ENCODE measurements at regions of chr1 and their contacts with region 1.

Region 1: DNA sequence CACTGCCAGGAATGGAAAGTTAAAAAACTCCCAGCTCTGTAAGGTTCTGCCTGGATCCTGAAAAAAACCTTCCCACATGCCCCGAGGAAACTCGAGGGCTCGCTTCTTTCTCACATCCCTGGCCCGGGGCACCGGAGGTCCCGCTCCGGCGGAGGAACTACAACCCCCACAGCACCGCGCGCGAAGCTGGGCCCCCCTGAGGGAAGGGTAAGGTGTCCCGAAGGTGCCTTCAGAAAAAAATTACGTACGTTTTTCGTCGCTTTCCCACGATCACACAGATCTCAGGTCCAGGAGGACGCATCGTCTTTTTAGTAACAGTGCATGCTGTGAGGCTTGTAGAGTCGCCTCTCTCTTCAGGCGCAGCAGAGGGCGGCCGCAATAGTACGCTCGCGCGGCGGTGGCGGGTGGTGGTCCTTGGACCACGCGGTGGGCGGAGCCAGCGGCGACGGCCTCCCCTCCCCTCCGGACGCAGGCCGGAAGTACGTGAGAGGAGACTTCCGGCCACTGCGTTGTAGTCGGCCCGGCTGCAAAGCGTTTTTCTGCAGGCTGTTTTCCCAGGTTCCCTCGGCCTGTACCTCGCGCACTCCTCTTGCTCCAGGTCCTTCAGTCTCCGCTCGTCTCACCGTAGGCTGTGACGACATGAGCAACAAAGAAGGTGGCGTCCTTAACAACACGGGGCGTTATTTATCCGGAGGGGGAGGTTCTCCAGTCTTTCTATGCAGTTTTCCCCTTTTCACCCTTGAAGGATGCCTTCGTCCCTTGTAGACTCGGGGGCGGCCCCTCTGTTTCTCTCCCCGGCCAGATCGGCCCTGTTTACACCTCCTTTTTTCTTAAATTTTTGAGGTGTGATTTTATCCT is at the start of gene TSNAX:
- DNase-seq: peak; percentile 85 to 94 (median 92)
- ATAC-seq: peak; percentile 93
- H3K4me3 ChIP-seq: peak within 1 kb of the TSS; percentile 93
- H3K4me3 Mint-ChIP-seq: peak within 1 kb of the TSS; percentile 85 to 99 (median 97)
- H3K27ac ChIP-seq: peak within 1 kb of the TSS; percentile 86
- H3K27ac Mint-ChIP-seq: peak within 1 kb of the TSS; percentile 96 to 100 (median 99)
- H3K4me1 ChIP-seq: peaks cover 24 to 26% of the 10 kb centered on the region in 2 donors
- H3K4me1 Mint-ChIP-seq: peaks cover 23 to 55% (median 50%) of the 10 kb centered on the region in 7 donors
- H3K27me3 ChIP-seq: no peaks in the 10 kb centered on the region
- H3K27me3 Mint-ChIP-seq: no peaks in the 10 kb centered on the region
- total RNA-seq, gene TSNAX: 33.7 to 49.7 (median 34.3) TPM

Region 2: GRCh38 chr1:230642263-230642959 is 886.0 kb before region 1 on chr1 and contains the start of gene COG2:
- CTCF ChIA-PET with region 1: no interaction called
- POLR2A ChIA-PET with region 1: no interaction called
- intact Hi-C with region 1: loop called in 1 of 2 experiments (anchors 5 kb)
- DNase-seq: peak; percentile 84 to 100 (median 91)
- ATAC-seq: peak; percentile 99
- H3K4me3 ChIP-seq: peak within 1 kb of the TSS; percentile 56
- H3K4me3 Mint-ChIP-seq: peak within 1 kb of the TSS; percentile 90 to 100 (median 96)
- H3K27ac ChIP-seq: peak within 1 kb of the TSS; percentile 76
- H3K27ac Mint-ChIP-seq: peak within 1 kb of the TSS; percentile 81 to 98 (median 93)
- H3K4me1 ChIP-seq: peaks cover 20 to 24% of the 10 kb centered on the region in 2 donors
- H3K4me1 Mint-ChIP-seq: peaks cover 36 to 56% (median 48%) of the 10 kb centered on the region in 7 donors
- H3K27me3 ChIP-seq: peaks cover 0 to 7% of the 10 kb centered on the region in 2 donors
- H3K27me3 Mint-ChIP-seq: peaks cover 0 to 24% (median 12%) of the 10 kb centered on the region in 5 donors
- total RNA-seq, gene COG2: 21.6 to 47.5 (median 34.7) TPM

Region 3: DNA sequence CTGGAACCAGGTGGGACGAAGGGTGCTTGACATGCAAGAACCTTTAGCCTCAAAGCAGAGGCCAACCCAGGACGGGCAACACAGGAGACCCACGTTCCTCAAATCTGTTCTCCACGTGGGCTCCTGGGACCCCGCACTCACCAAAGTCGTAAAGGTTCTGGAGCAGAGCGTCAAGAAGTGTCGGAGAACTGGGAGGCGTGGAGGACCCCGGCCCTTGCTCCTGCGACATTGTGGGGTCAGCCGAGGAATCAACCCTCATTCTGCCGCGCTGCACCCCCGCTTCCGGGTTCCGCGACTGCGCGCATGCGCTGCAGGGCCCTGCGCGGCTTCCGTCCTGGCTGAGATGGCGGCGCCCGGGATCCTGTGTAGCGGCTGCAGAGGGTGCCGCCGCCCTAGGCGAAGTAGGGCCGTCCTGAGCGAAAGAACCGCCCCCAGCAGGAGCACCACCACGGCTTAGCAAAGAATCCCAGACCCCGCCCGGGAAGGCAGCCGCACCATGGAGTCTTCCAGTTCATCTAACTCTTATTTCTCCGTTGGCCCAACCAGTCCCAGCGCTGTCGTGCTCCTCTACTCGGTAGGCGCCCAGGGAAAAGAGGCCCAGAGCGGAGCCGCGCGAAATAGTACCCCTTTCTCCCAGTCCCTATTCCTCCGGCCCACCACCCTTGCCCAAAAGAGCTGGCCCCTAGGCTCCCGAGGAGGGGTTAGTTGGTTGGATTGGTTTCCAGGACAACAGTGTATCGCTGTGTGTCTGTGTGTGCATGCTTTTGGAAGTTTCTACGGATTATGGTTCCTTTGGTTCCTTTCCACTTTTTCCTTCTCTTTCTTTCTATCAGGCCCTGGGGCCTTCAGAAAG is 287.3 kb before region 1 on chr1 and contains the start of gene GNPAT:
- CTCF ChIA-PET with region 1: no interaction called
- POLR2A ChIA-PET with region 1: no interaction called
- intact Hi-C with region 1: loop called (anchors 1 kb)
- DNase-seq: peak; percentile 86 to 97 (median 92)
- ATAC-seq: peak; percentile 98
- H3K4me3 ChIP-seq: peak within 1 kb of the TSS; percentile 98
- H3K4me3 Mint-ChIP-seq: peak within 1 kb of the TSS; percentile 90 to 99 (median 95)
- H3K27ac ChIP-seq: peak within 1 kb of the TSS; percentile 93
- H3K27ac Mint-ChIP-seq: peak within 1 kb of the TSS; percentile 92 to 99 (median 97)
- H3K4me1 ChIP-seq: peaks cover 17 to 44% of the 10 kb centered on the region in 2 donors
- H3K4me1 Mint-ChIP-seq: peaks cover 47 to 86% (median 76%) of the 10 kb centered on the region in 7 donors
- H3K27me3 ChIP-seq: no peaks in the 10 kb centered on the region
- H3K27me3 Mint-ChIP-seq: no peaks in the 10 kb centered on the region
- total RNA-seq, gene GNPAT: 17.3 to 41.0 (median 35.5) TPM

Region 4: GRCh38 chr1:231357831-231358354 is 170.5 kb before region 1 on chr1:
- CTCF ChIA-PET with region 1: no interaction called
- POLR2A ChIA-PET with region 1: no interaction called
- intact Hi-C with region 1: loop called in 1 of 2 experiments (anchors 5 kb)
- DNase-seq: peak in 7 of 9 donors; percentile 36 to 64 (median 55)
- ATAC-seq: peak; percentile 91
- H3K4me3 ChIP-seq: no peak overlapping the region
- H3K4me3 Mint-ChIP-seq: no peak overlapping the region
- H3K27ac ChIP-seq: no peak overlapping the region
- H3K27ac Mint-ChIP-seq: peak overlapping the region in 7 of 9 donors; percentile 3 to 63 (median 27)
- H3K4me1 ChIP-seq: peaks cover 0 to 3% of the 10 kb centered on the region in 2 donors
- H3K4me1 Mint-ChIP-seq: peaks cover 2 to 15% (median 7%) of the 10 kb centered on the region in 7 donors
- H3K27me3 ChIP-seq: no peaks in the 10 kb centered on the region
- H3K27me3 Mint-ChIP-seq: no peaks in the 10 kb centered on the region

Region 5: GRCh38 chr1:231603598-231604275 is 75.3 kb after region 1 on chr1:
- CTCF ChIA-PET with region 1: no interaction called
- POLR2A ChIA-PET with region 1: interaction called, 3 read pairs
- intact Hi-C with region 1: loop called in 1 of 2 experiments (anchors 2 kb)
- DNase-seq: peak; percentile 13 to 72 (median 67)
- ATAC-seq: peak; percentile 87
- H3K4me3 ChIP-seq: peak overlapping the region; percentile 67
- H3K4me3 Mint-ChIP-seq: peak overlapping the region; percentile 77 to 98 (median 94)
- H3K27ac ChIP-seq: peak overlapping the region; percentile 70
- H3K27ac Mint-ChIP-seq: peak overlapping the region; percentile 79 to 96 (median 87)
- H3K4me1 ChIP-seq: no peaks in the 10 kb centered on the region
- H3K4me1 Mint-ChIP-seq: peaks cover 8 to 19% (median 11%) of the 10 kb centered on the region in 7 donors
- H3K27me3 ChIP-seq: no peaks in the 10 kb centered on the region
- H3K27me3 Mint-ChIP-seq: peaks cover 0 to 18% (median 0%) of the 10 kb centered on the region in 5 donors

Region 6: DNA sequence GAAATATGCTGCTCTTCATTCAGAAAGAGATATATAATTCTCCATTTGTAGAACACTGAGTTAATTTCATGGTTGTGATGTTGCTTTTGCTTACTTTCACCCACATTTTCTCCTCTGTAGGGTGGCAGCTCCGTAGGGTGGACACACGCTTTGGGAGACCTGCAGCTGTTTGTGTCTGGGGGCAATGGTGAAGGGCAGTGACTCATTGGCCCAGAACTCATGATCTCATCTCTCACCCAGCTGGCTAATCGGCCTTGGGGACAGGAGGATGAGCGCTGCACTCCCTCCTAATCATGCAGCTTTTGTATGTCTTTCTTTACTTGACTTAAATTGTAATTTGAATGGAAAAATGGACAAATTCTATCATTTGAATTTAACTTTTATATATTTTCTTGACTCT is 107.8 kb after region 1 on chr1:
- CTCF ChIA-PET with region 1: no interaction called
- POLR2A ChIA-PET with region 1: no interaction called
- intact Hi-C with region 1: no loop called
- DNase-seq: no peak
- ATAC-seq: no peak
- H3K4me3 ChIP-seq: no peak overlapping the region
- H3K4me3 Mint-ChIP-seq: no peak overlapping the region
- H3K27ac ChIP-seq: no peak overlapping the region
- H3K27ac Mint-ChIP-seq: peak overlapping the region in 2 of 9 donors; percentile 25 to 26
- H3K4me1 ChIP-seq: no peaks in the 10 kb centered on the region
- H3K4me1 Mint-ChIP-seq: peaks cover 5 to 66% (median 49%) of the 10 kb centered on the region in 7 donors
- H3K27me3 ChIP-seq: no peaks in the 10 kb centered on the region
- H3K27me3 Mint-ChIP-seq: no peaks in the 10 kb centered on the region

Region 7: GRCh38 chr1:232805269-232806185 is 1277.1 kb after region 1 on chr1 and contains the start of gene MAP10:
- CTCF ChIA-PET with region 1: no interaction called
- POLR2A ChIA-PET with region 1: no interaction called
- intact Hi-C with region 1: loop called in 1 of 2 experiments (anchors 5 kb)
- DNase-seq: peak; percentile 46 to 79 (median 69)
- ATAC-seq: peak; percentile 83
- H3K4me3 ChIP-seq: peak within 1 kb of the TSS; percentile 65
- H3K4me3 Mint-ChIP-seq: peak within 1 kb of the TSS; percentile 82 to 93 (median 88)
- H3K27ac ChIP-seq: peak within 1 kb of the TSS; percentile 64
- H3K27ac Mint-ChIP-seq: peak within 1 kb of the TSS; percentile 60 to 95 (median 87)
- H3K4me1 ChIP-seq: peaks cover 7 to 12% of the 10 kb centered on the region in 2 donors
- H3K4me1 Mint-ChIP-seq: peaks cover 10 to 35% (median 22%) of the 10 kb centered on the region in 7 donors
- H3K27me3 ChIP-seq: no peaks in the 10 kb centered on the region
- H3K27me3 Mint-ChIP-seq: peaks cover 0 to 12% (median 0%) of the 10 kb centered on the region in 5 donors
- total RNA-seq, gene MAP10: 1.5 to 4.5 (median 3.2) TPM

Measured in naive thymus-derived CD4-positive, alpha-beta T cell (primary cell).